Posterior vena cava (tissue), 2 donors: ENCODE measurements at regions of chr7 and their contacts with region 1.

Region 1: DNA sequence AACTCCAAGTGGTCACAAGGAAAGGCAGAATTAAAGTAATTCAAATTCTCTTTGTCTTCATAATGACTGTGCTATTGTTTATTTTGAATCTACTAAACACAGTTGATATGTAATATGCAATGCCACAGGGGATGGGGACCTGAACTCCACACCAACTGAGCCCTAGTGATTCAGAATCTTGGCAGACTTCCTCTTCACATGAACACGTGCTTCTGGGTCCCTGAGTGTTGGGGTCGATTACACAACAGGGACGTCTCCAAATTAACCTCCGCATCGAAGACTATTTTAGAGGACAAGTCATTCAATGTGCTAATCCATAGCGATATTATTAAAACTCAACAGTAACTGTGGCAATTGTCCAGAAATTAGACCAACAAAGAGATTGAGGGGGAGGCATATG is 95.3 kb upstream of the CARD11 start:
- DNase-seq: no peak

Region 2: GRCh38 chr7:3107889-3108570 is 31.0 kb before region 1 on chr7:
- intact Hi-C with region 1: loop called in 1 of 2 experiments (anchors 1 kb)
- DNase-seq: no peak